CD4-positive, alpha-beta memory T cell (primary cell): ENCODE measurements at regions of chr5 and their contacts with region 1.

Region 1: DNA sequence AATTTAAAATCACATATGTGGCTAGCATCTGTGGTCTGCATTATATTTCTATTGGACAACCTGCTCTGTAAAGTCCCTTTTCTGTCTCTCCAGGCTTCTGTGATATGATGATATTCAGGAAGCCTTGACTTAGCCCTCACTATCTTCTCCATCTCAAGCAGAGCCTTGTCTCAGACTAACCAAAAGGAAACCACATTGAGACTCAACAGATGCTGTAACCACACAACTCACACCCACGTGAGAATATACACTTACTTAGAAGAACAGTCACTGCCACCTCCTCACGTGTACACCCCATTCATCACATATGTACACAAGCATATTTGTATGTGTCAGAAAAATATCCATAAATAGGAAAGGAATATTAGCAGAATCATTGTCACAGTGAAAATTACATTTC is 33.6 kb downstream of the HTR4 start:
- DNase-seq: peak; percentile 39 to 68 (median 50)
- H3K4me3 ChIP-seq: no peak overlapping the region
- H3K4me3 Mint-ChIP-seq: peak overlapping the region in 5 of 8 donors; percentile 2 to 53 (median 32)
- H3K27ac ChIP-seq: no peak overlapping the region
- H3K27ac Mint-ChIP-seq: peak overlapping the region in 3 of 7 donors; percentile 13 to 66 (median 48)
- H3K4me1 ChIP-seq: peaks cover 19% of the 10 kb centered on the region
- H3K4me1 Mint-ChIP-seq: peaks cover 20 to 35% (median 27%) of the 10 kb centered on the region in 4 donors
- H3K27me3 ChIP-seq: no peaks in the 10 kb centered on the region
- H3K27me3 Mint-ChIP-seq: peaks cover 2 to 4% of the 10 kb centered on the region in 2 donors

Region 2: GRCh38 chr5:148569948-148570347 is 50.7 kb before region 1 on chr5:
- CTCF ChIA-PET with region 1: no interaction called
- POLR2A ChIA-PET with region 1: no interaction called
- intact Hi-C with region 1: loop called (anchors 10 kb)
- DNase-seq: no peak
- H3K4me3 ChIP-seq: no peak overlapping the region
- H3K4me3 Mint-ChIP-seq: no peak overlapping the region
- H3K27ac ChIP-seq: no peak overlapping the region
- H3K27ac Mint-ChIP-seq: no peak overlapping the region
- H3K4me1 ChIP-seq: no peaks in the 10 kb centered on the region
- H3K4me1 Mint-ChIP-seq: no peaks in the 10 kb centered on the region
- H3K27me3 ChIP-seq: no peaks in the 10 kb centered on the region
- H3K27me3 Mint-ChIP-seq: peaks cover 8 to 11% of the 10 kb centered on the region in 2 donors

Region 3: DNA sequence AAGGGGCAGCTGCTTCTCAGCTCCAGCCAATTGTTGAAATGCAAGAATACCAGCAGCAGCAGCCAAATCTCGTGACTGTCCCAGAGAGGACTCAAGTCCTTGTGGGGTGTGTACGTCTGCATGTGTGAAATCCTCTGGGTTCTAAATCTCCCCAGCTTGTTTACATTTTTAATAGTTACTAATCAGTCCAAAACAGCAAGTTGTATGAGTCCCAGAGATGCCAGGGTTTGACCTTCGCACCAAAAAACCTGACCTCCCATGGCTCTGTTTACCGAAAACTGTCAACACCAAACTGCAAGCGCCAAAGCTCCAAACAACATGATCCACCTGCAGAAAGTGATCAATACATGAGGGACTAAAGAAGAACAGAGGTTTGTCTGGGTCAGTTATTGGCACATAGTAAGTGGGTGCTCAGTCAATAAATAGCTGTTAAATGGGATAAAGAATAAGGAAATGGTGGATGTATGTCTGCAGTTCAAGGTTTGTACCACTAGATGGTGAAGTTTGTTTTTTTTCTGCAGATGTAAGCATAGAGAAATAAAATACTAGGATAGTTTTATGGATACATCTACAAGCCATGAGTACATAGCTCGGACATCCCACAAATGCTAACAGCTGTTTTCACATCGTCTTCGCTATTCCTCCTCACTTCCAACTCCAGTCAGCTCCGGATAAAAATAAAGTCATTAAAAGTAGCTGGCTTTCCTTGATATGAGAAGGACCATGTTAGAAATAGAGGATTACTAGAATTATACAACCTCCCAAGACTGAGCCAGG is 120.5 kb after region 1 on chr5:
- CTCF ChIA-PET with region 1: no interaction called
- POLR2A ChIA-PET with region 1: no interaction called
- intact Hi-C with region 1: no loop called
- DNase-seq: peak in 4 of 5 donors; percentile 28 to 35 (median 32)
- H3K4me3 ChIP-seq: no peak overlapping the region
- H3K4me3 Mint-ChIP-seq: no peak overlapping the region
- H3K27ac ChIP-seq: no peak overlapping the region
- H3K27ac Mint-ChIP-seq: no peak overlapping the region
- H3K4me1 ChIP-seq: no peaks in the 10 kb centered on the region
- H3K4me1 Mint-ChIP-seq: no peaks in the 10 kb centered on the region
- H3K27me3 ChIP-seq: no peaks in the 10 kb centered on the region
- H3K27me3 Mint-ChIP-seq: peaks cover 4 to 15% of the 10 kb centered on the region in 2 donors

Region 4: DNA sequence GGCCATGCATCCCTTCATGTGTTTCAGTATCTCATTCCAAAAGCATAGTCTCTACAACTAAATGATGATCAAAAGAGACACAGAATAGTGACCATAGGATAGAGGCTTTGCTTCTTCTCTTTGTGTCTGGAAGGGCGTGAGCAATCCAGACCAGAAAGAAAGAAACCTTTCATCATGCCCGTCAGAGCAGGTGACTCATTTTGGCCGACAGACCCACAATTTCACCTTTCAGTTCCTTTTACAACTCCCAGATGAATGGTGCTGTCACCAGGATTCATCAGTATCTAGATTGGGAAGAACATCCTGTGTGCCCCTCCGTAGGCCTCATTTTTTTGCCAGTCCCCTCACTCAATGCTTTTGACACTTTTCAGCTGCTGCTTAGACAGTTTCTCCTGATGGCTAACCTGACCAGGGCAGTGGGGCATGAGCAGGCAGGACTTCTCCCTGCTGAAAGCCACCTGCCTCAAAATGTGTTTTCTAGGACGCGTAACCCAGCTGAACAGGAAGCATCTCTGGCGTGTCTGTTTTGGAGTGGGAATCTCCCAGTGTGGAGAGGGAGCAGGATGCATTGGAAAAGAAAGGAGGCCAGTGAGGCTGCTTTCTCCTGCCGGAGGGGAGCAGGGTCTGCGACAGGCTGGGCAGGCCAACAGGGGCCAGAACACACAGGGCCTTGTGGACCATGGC is 541.8 kb after region 1 on chr5:
- CTCF ChIA-PET with region 1: no interaction called
- POLR2A ChIA-PET with region 1: no interaction called
- intact Hi-C with region 1: no loop called
- DNase-seq: no peak
- H3K4me3 ChIP-seq: no peak overlapping the region
- H3K4me3 Mint-ChIP-seq: no peak overlapping the region
- H3K27ac ChIP-seq: no peak overlapping the region
- H3K27ac Mint-ChIP-seq: no peak overlapping the region
- H3K4me1 ChIP-seq: no peaks in the 10 kb centered on the region
- H3K4me1 Mint-ChIP-seq: no peaks in the 10 kb centered on the region
- H3K27me3 ChIP-seq: no peaks in the 10 kb centered on the region
- H3K27me3 Mint-ChIP-seq: peaks cover 2 to 3% of the 10 kb centered on the region in 2 donors